Activated naive CD4-positive, alpha-beta T cell treated with anti-CD3 and anti-CD28 coated beads for 36 hours (primary cell): ENCODE measurements at regions of chr14 and their contacts with region 1.

Region 1: GRCh38 chr14:67816326-67817002 is at the start of gene ZFYVE26:
- DNase-seq: peak; percentile 96
- H3K4me3 Mint-ChIP-seq: peak within 1 kb of the TSS; percentile 95
- H3K27ac Mint-ChIP-seq: peak within 1 kb of the TSS; percentile 91
- H3K4me1 Mint-ChIP-seq: peaks cover 46% of the 10 kb centered on the region
- H3K27me3 Mint-ChIP-seq: no peaks in the 10 kb centered on the region
- total RNA-seq, gene ZFYVE26: 11.7 to 12.1 TPM

Region 2: DNA sequence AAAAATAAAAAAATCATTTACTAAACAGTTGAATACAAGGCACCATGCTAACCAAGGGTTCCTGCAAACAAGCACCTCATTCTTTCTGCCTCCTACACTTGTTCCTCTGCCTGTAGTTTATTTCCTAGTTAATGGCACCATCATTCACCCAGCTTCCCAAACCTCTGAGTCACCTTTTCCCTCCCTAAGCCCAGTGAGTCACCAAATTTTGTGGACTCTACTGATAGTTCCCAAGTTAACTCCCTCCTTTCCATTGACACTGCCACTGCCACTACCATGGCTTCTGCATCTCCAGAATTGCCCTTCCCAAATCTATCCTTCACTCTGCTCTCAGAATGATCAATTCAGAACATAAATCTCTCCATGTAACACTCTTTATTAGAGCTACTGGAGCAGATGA is 629.3 kb before region 1 on chr14:
- CTCF ChIA-PET with region 1: no interaction called
- intact Hi-C with region 1: no loop called
- DNase-seq: no peak
- H3K4me3 Mint-ChIP-seq: no peak overlapping the region
- H3K27ac Mint-ChIP-seq: no peak overlapping the region
- H3K4me1 Mint-ChIP-seq: peaks cover 17% of the 10 kb centered on the region
- H3K27me3 Mint-ChIP-seq: peaks cover 3% of the 10 kb centered on the region

Region 3: GRCh38 chr14:67240978-67241414 is 575.5 kb before region 1 on chr14:
- CTCF ChIA-PET with region 1: no interaction called
- intact Hi-C with region 1: loop called (anchors 2 kb)
- DNase-seq: peak; percentile 94
- H3K4me3 Mint-ChIP-seq: peak overlapping the region; percentile 85
- H3K27ac Mint-ChIP-seq: peak overlapping the region; percentile 86
- H3K4me1 Mint-ChIP-seq: peaks cover 19% of the 10 kb centered on the region
- H3K27me3 Mint-ChIP-seq: peaks cover 2% of the 10 kb centered on the region

Region 4: DNA sequence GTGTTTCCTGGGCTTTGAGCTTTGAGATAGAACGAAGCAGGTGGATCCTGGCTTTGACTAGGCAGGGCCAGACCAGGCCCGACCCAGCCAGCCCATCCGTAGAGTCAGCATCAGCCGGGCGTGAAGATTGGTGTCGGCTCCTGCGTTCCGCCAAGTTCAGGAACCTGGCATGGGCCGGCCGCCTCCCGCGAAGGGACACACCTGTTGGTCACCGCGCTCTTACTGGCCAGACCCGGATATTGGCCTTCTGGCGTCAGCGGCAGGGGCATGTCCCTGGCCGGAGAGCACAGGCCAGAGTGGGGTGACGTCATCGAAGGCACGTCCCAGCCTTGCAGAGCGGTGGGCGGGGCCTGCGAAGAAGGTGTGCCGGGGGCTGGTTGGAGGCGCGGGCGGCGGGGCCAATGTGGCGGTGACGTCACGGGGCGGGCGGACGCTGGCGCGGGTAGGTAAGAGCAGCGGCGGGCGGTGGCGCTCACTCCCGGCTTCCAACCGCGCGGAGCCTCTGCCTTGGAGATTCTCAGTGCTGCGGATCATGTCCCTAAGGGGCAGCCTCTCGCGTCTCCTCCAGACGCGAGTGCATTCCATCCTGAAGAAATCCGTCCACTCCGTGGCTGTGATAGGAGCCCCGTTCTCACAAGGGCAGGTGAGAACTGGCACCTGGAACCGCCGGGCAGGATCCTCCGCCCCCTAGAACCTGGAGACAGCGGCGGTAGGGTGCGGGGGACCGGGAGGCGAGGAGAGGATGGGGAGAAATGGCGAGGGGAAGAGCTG is 196.8 kb before region 1 on chr14 and contains the start of gene ARG2:
- CTCF ChIA-PET with region 1: no interaction called
- intact Hi-C with region 1: loop called (anchors 1 kb)
- DNase-seq: peak; percentile 98
- H3K4me3 Mint-ChIP-seq: peak within 1 kb of the TSS; percentile 87
- H3K27ac Mint-ChIP-seq: peak within 1 kb of the TSS; percentile 69
- H3K4me1 Mint-ChIP-seq: peaks cover 42% of the 10 kb centered on the region
- H3K27me3 Mint-ChIP-seq: peaks cover 4% of the 10 kb centered on the region
- total RNA-seq, gene ARG2: 20.3 to 20.8 TPM

Region 5: DNA sequence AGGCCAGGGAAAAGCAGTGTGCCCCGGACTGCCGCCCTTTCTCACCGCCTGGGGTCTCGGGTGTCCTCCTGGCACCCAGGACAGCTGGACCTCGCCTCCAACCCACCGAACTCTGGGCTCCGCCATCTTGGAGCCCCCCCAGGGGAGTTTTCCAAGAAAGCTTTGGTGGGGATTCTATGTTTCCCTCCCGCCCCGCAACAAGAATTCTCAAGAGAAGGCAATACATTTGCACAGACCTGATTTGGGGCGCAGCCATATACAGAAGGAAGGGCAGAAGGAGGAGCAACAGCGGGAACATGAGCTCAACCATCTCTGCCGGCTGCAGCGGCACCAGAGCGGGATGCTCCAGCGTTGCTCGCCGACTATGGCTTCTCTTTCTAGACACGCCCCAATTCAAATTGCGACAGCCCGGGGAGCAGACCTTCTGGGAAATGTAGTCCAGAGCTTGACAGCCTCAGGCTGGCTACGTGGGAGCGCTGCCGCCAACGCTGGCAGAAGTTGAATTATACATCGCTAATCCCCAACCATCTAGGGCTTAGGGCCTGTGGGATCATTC is 121.0 kb before region 1 on chr14 and contains the start of gene RDH11:
- CTCF ChIA-PET with region 1: no interaction called
- intact Hi-C with region 1: loop called (anchors 1 kb)
- DNase-seq: peak; percentile 91
- H3K4me3 Mint-ChIP-seq: peak within 1 kb of the TSS; percentile 81
- H3K27ac Mint-ChIP-seq: peak within 1 kb of the TSS; percentile 91
- H3K4me1 Mint-ChIP-seq: peaks cover 22% of the 10 kb centered on the region
- H3K27me3 Mint-ChIP-seq: no peaks in the 10 kb centered on the region
- total RNA-seq, gene RDH11: 58.5 to 64.3 TPM

Region 6: GRCh38 chr14:69191340-69192111 is 1375.1 kb after region 1 on chr14 and contains the start of gene EXD2:
- CTCF ChIA-PET with region 1: no interaction called
- intact Hi-C with region 1: loop called (anchors 5 kb)
- DNase-seq: peak; percentile 91
- H3K4me3 Mint-ChIP-seq: peak within 1 kb of the TSS; percentile 93
- H3K27ac Mint-ChIP-seq: peak within 1 kb of the TSS; percentile 76
- H3K4me1 Mint-ChIP-seq: peaks cover 23% of the 10 kb centered on the region
- H3K27me3 Mint-ChIP-seq: no peaks in the 10 kb centered on the region
- total RNA-seq, gene EXD2: 11.8 to 12.7 TPM